CD4-positive, alpha-beta T cell (primary cell): ENCODE measurements at regions of chr6 and their contacts with region 1.

Region 1: GRCh38 chr6:27132532-27133280 is 114.8 kb upstream of the PRSS16 start:
- DNase-seq: peak; percentile 80 to 99 (median 88)
- ATAC-seq: peak; percentile 79
- H3K4me3 ChIP-seq: peak overlapping the region; percentile 75
- H3K4me3 Mint-ChIP-seq: no peak overlapping the region
- H3K27ac ChIP-seq: peak overlapping the region; percentile 79 to 81
- H3K27ac Mint-ChIP-seq: no peak overlapping the region
- H3K4me1 ChIP-seq: peaks cover 31% of the 10 kb centered on the region
- H3K4me1 Mint-ChIP-seq: peaks cover 12% of the 10 kb centered on the region
- H3K27me3 ChIP-seq: no peaks in the 10 kb centered on the region
- H3K27me3 Mint-ChIP-seq: no peaks in the 10 kb centered on the region
- CTCF ChIP-seq: no peak

Region 2: DNA sequence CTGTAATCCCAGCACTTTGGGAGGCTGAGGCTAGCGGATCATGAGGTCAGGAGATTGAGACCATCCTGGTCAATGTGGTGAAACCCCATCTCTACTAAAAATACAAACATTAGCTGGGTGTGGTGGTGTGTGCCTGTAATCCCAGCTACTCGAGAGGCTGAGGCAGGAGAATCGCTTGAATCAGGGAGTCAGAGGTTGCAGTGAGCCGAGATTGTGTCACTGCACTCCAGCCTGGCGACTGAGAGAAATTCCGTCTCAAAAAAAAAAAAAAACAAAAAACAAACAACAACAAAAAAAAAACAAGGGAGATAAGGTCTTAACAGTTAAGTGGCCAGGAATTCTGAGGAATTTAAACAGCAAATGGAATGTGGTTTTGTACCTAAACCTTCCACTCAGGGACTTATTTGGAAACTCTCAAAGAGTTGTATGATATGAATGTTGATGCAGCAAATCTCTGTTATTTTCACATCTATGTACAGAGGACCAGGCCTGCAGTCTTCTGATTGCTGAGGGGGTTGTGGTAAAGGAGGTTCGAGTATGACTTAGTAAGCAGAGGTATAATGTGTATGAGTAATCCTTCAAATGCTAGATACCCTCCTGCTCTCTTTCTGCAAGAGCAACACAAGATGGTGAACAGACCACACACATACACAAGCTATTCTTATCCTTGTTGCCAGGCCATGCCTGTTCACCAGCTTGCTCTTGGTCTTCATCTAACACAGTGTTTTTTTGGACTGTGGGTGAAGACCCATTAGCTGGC is 1655.7 kb before region 1 on chr6:
- CTCF ChIA-PET with region 1: no interaction called
- POLR2A ChIA-PET with region 1: no interaction called
- intact Hi-C with region 1: no loop called
- DNase-seq: no peak
- ATAC-seq: no peak
- H3K4me3 ChIP-seq: no peak overlapping the region
- H3K4me3 Mint-ChIP-seq: no peak overlapping the region
- H3K27ac ChIP-seq: no peak overlapping the region
- H3K27ac Mint-ChIP-seq: no peak overlapping the region
- H3K4me1 ChIP-seq: no peaks in the 10 kb centered on the region
- H3K4me1 Mint-ChIP-seq: no peaks in the 10 kb centered on the region
- H3K27me3 ChIP-seq: no peaks in the 10 kb centered on the region
- H3K27me3 Mint-ChIP-seq: no peaks in the 10 kb centered on the region
- CTCF ChIP-seq: no peak

Region 3: GRCh38 chr6:26045065-26045927 is 1087.4 kb before region 1 on chr6:
- CTCF ChIA-PET with region 1: no interaction called
- POLR2A ChIA-PET with region 1: interaction called, 18 read pairs
- intact Hi-C with region 1: no loop called
- DNase-seq: peak; percentile 49 to 96 (median 74)
- ATAC-seq: peak; percentile 55
- H3K4me3 ChIP-seq: peak overlapping the region; percentile 70
- H3K4me3 Mint-ChIP-seq: peak overlapping the region; percentile 97
- H3K27ac ChIP-seq: peak overlapping the region; percentile 71 to 91
- H3K27ac Mint-ChIP-seq: peak overlapping the region; percentile 94
- H3K4me1 ChIP-seq: peaks cover 21% of the 10 kb centered on the region
- H3K4me1 Mint-ChIP-seq: peaks cover 28% of the 10 kb centered on the region
- H3K27me3 ChIP-seq: no peaks in the 10 kb centered on the region
- H3K27me3 Mint-ChIP-seq: no peaks in the 10 kb centered on the region
- CTCF ChIP-seq: no peak

Region 4: DNA sequence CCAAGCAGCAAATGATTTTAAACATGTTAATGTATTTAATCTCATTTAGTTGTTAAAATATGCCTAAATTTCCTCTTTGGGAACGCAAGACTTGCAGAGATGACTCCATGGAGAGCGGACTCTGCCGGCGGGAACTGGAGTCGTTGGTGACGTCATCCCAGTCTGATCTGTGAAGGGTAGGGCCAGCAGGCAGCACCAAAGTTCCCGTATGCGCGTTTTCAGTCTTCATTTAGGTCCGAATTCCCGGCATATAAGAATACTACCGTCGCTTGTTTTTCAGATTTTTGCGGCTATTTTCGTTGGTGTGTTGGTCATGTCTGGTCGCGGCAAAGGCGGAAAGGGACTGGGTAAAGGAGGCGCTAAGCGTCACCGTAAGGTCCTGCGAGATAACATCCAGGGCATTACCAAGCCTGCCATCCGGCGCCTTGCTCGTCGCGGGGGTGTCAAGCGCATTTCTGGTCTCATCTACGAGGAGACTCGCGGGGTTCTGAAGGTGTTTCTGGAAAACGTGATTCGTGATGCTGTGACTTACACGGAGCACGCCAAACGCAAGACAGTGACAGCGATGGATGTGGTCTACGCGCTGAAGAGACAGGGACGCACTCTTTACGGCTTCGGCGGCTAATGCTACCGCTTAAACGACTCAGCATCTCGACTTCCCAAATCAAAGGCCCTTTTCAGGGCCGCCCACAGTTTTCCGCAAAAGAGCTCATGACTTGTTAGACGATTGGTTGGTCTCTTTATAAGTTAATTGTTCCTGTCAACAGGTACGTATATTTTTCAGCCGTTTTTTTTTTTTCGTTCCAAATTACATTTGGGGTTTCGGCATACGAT is 928.2 kb before region 1 on chr6:
- CTCF ChIA-PET with region 1: no interaction called
- POLR2A ChIA-PET with region 1: interaction called, 82 read pairs
- intact Hi-C with region 1: loop called in 1 of 2 experiments (anchors 10 kb)
- DNase-seq: peak; percentile 73 to 98 (median 80)
- ATAC-seq: peak; percentile 69
- H3K4me3 ChIP-seq: peak overlapping the region; percentile 68
- H3K4me3 Mint-ChIP-seq: no peak overlapping the region
- H3K27ac ChIP-seq: peak overlapping the region; percentile 89 to 90
- H3K27ac Mint-ChIP-seq: no peak overlapping the region
- H3K4me1 ChIP-seq: peaks cover 34% of the 10 kb centered on the region
- H3K4me1 Mint-ChIP-seq: peaks cover 8% of the 10 kb centered on the region
- H3K27me3 ChIP-seq: no peaks in the 10 kb centered on the region
- H3K27me3 Mint-ChIP-seq: no peaks in the 10 kb centered on the region
- CTCF ChIP-seq: peak; percentile 32

Region 5: DNA sequence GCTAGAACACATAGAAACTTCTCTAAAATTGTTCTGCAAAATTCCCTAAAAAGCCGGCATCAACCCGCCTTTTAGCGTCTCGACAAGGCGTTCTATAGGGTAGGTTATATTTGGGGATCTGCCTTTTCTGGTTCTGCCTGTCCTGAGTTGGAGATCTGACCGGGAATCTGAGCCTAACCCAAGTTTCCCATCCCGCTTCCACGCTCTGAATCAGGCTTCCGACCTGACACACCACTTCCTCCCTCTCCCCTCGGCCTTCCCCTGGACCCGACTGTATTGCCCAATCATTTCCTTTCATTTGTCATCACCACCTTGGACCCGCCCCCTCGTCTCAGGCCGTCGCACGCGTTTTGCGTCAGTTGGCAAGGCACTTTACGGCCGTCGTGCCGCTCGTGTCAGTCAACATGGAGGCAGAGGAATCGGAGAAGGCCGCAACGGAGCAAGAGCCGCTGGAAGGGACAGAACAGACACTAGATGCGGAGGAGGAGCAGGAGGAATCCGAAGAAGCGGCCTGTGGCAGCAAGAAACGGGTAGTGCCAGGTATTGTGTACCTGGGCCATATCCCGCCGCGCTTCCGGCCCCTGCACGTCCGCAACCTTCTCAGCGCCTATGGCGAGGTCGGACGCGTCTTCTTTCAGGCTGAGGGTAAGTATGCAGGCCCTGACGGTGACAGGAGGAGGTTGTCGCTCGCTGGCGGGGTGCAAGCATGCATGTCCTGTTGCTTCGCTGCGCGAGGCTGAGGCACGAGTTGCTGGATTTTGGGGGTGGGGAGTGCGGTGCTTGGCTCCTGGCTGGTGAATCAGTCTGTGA is 535.9 kb before region 1 on chr6 and contains the start of gene ABT1:
- CTCF ChIA-PET with region 1: interaction called, 3 read pairs
- POLR2A ChIA-PET with region 1: no interaction called
- intact Hi-C with region 1: loop called in 1 of 2 experiments (anchors 5 kb)
- DNase-seq: peak; percentile 92 to 98 (median 96)
- ATAC-seq: peak; percentile 79
- H3K4me3 ChIP-seq: peak within 1 kb of the TSS; percentile 98
- H3K4me3 Mint-ChIP-seq: no peak within 1 kb of the TSS
- H3K27ac ChIP-seq: peak within 1 kb of the TSS; percentile 86 to 95
- H3K27ac Mint-ChIP-seq: no peak within 1 kb of the TSS
- H3K4me1 ChIP-seq: peaks cover 31% of the 10 kb centered on the region
- H3K4me1 Mint-ChIP-seq: peaks cover 23% of the 10 kb centered on the region
- H3K27me3 ChIP-seq: peaks cover 8 to 28% of the 10 kb centered on the region in 2 experiments
- H3K27me3 Mint-ChIP-seq: peaks cover 30% of the 10 kb centered on the region
- CTCF ChIP-seq: no peak
- total RNA-seq, gene ABT1: 39.8 to 40.4 TPM

Region 6: GRCh38 chr6:27096834-27097511 is 35.7 kb before region 1 on chr6:
- CTCF ChIA-PET with region 1: no interaction called
- POLR2A ChIA-PET with region 1: no interaction called
- intact Hi-C with region 1: no loop called
- DNase-seq: peak in 6 of 14 experiments; percentile 3 to 41 (median 27)
- ATAC-seq: no peak
- H3K4me3 ChIP-seq: peak overlapping the region; percentile 44
- H3K4me3 Mint-ChIP-seq: peak overlapping the region; percentile 70
- H3K27ac ChIP-seq: no peak overlapping the region
- H3K27ac Mint-ChIP-seq: no peak overlapping the region
- H3K4me1 ChIP-seq: peaks cover 13% of the 10 kb centered on the region
- H3K4me1 Mint-ChIP-seq: peaks cover 14% of the 10 kb centered on the region
- H3K27me3 ChIP-seq: peaks cover 45 to 62% of the 10 kb centered on the region in 2 experiments
- H3K27me3 Mint-ChIP-seq: peaks cover 72% of the 10 kb centered on the region
- CTCF ChIP-seq: no peak

Region 7: DNA sequence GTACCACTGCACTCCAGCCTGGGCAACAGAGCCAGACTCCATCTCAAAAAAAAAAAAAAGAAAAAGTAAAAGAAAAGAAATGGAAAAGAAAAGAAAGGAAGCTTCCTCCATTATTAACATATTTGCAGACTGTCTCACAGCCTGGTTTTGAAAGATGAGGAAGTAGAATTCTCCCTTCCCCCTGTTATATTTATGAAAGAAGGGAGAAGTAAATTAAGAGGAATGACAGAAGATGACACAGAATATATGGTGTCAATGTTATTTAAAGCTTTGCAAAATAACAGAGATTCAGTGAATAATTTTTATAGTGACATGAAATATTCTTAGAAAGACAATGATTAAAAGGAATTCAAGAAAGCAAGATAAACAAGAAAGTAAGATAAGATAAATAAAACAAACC is 31.1 kb after region 1 on chr6:
- CTCF ChIA-PET with region 1: no interaction called
- POLR2A ChIA-PET with region 1: no interaction called
- intact Hi-C with region 1: no loop called
- DNase-seq: no peak
- ATAC-seq: no peak
- H3K4me3 ChIP-seq: no peak overlapping the region
- H3K4me3 Mint-ChIP-seq: no peak overlapping the region
- H3K27ac ChIP-seq: no peak overlapping the region
- H3K27ac Mint-ChIP-seq: no peak overlapping the region
- H3K4me1 ChIP-seq: no peaks in the 10 kb centered on the region
- H3K4me1 Mint-ChIP-seq: peaks cover 5% of the 10 kb centered on the region
- H3K27me3 ChIP-seq: no peaks in the 10 kb centered on the region
- H3K27me3 Mint-ChIP-seq: no peaks in the 10 kb centered on the region
- CTCF ChIP-seq: no peak

Region 8: DNA sequence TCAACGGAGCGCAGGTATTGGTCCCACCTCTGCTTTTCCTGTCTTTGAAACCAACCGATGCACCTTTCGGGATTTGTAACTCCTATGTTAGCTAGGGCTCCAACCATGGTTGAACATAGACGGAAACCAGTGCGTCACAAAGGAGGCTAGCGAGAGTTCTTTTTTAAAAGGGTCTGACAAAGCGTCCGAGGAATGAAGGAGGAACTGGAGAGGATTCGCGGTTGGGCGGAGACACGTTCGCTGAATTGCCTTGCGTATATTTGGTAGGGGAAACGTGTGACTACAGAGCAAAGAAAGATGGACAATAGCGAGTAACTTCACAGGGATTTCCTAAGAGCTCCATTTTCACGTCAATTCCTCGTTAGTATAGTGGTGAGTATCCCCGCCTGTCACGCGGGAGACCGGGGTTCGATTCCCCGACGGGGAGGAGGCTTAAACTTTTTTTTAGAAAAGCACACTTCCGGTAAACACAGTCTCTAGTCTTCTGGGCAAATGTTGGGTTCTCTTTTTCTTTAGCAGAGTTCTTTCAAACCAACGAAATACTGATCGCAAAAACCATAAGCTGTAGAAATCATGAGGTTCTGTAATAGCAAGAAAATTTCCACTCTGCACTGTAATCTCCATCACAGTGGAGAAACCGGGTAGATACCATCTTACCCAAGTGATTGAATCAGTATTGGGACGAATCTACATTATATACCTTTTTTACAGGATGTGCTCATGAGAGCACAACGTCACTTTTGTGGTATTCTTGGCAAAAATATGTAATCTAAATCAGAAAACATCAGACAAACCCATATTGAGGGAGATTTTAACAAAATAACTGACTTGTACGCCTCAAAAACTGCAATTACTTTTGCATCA is 346.8 kb after region 1 on chr6:
- CTCF ChIA-PET with region 1: no interaction called
- POLR2A ChIA-PET with region 1: interaction called, 31 read pairs
- intact Hi-C with region 1: loop called in 1 of 2 experiments (anchors 5 kb)
- DNase-seq: peak; percentile 82 to 94 (median 90)
- ATAC-seq: peak; percentile 71
- H3K4me3 ChIP-seq: peak overlapping the region; percentile 62
- H3K4me3 Mint-ChIP-seq: no peak overlapping the region
- H3K27ac ChIP-seq: peak overlapping the region; percentile 93 to 94
- H3K27ac Mint-ChIP-seq: no peak overlapping the region
- H3K4me1 ChIP-seq: peaks cover 16% of the 10 kb centered on the region
- H3K4me1 Mint-ChIP-seq: peaks cover 3% of the 10 kb centered on the region
- H3K27me3 ChIP-seq: no peaks in the 10 kb centered on the region
- H3K27me3 Mint-ChIP-seq: no peaks in the 10 kb centered on the region
- CTCF ChIP-seq: no peak

Region 9: DNA sequence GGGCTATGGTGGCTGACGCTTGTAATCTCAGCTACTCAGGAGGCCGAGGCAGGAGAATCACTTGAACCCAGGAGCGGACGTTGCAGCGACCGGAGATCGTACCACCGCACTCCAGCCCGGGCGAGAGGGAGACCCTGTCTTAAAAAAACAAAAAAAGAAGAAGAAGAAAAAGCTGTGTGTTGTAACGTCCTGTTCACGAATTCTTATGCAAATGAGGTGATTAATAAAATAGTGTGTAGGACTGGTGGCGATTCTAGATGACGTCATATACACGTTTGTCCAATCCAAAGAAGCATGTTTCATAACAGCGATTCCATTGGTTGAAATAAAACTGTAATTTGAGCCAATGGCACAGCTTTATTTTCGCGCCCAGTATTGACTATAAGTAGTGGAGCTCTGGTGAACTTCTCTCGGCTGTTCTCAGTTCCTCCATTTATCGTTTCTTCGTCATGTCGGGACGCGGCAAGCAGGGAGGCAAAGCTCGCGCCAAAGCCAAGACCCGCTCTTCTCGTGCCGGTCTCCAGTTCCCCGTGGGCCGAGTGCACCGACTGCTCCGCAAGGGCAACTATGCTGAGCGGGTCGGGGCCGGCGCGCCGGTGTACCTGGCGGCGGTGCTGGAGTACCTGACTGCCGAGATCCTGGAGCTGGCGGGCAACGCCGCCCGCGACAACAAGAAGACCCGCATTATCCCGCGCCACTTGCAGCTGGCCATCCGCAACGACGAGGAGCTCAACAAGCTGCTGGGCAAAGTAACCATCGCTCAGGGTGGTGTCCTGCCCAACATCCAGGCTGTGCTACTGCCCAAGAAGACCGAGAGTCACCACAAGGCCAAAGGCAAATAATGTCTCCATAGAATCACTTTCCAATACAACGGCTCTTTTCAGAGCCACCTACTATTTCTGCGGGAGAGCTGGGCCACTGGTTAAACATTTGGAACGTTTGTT is 732.5 kb after region 1 on chr6:
- CTCF ChIA-PET with region 1: no interaction called
- POLR2A ChIA-PET with region 1: interaction called, 42 read pairs
- intact Hi-C with region 1: loop called in 1 of 2 experiments (anchors 5 kb)
- DNase-seq: peak in 13 of 14 experiments; percentile 35 to 97 (median 61)
- ATAC-seq: peak; percentile 83
- H3K4me3 ChIP-seq: peak overlapping the region; percentile 59
- H3K4me3 Mint-ChIP-seq: peak overlapping the region; percentile 100
- H3K27ac ChIP-seq: peak overlapping the region; percentile 54 to 78
- H3K27ac Mint-ChIP-seq: peak overlapping the region; percentile 93
- H3K4me1 ChIP-seq: peaks cover 38% of the 10 kb centered on the region
- H3K4me1 Mint-ChIP-seq: peaks cover 41% of the 10 kb centered on the region
- H3K27me3 ChIP-seq: no peaks in the 10 kb centered on the region
- H3K27me3 Mint-ChIP-seq: peaks cover 3% of the 10 kb centered on the region
- CTCF ChIP-seq: no peak